ENCODE measurements at regions of chr1 and their contacts with region 1.

Region 1: GRCh38 chr1:205791568-205792180 is 16.4 kb upstream of the RAB29 start:
- DNase-seq: no peak
- H3K4me3 ChIP-seq: no peak overlapping the region
- H3K27ac ChIP-seq: no peak overlapping the region
- H3K4me1 ChIP-seq: no peaks in the 10 kb centered on the region
- H3K27me3 ChIP-seq: no peaks in the 10 kb centered on the region
- CTCF ChIP-seq: peak; percentile 19 to 80 (median 60)
- EP300 ChIP-seq: no peak
- POLR2A ChIP-seq: no peak

Region 2: DNA sequence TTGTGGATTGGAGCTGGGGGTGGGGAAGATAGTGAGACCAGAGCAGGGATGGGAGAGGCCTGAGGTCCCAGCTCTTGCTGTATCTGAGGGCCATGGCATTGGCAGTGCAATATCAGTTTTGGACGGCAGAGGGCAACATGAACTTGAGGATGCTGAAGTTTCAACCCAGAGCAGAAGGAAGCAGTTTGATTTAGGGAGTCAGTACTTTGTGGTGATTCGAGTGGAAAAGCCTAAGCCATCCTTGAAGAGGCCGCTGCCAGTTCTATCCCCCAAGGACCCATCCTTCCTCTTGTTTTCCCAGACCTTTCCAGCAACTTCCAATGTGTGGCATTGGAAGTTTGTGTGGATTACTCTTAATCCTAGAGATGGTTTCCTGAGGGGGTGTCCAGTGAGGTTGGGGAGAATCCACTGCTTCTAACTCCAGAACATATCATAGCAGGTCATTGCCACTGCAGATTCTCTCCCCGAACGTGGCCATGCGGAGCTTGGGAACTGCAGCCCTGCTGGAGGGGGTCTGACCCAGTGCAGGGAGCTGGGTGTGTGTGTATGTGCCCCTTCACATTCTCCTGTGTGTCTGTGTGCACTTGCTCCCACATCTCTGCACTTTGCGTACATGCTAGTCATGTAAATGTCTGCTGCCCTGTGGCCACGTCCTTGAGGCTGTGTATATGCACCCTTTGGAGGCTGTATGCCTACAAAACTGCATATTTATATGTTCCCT is 127.5 kb after region 1 on chr1:
- intact Hi-C with region 1: loop called (anchors 5 kb)
- DNase-seq: peak; percentile 82
- H3K4me3 ChIP-seq: no peak overlapping the region
- H3K27ac ChIP-seq: no peak overlapping the region
- H3K4me1 ChIP-seq: peaks cover 0 to 4% (median 0%) of the 10 kb centered on the region in 4 donors
- H3K27me3 ChIP-seq: no peaks in the 10 kb centered on the region
- CTCF ChIP-seq: peak; percentile 66 to 94 (median 83)
- EP300 ChIP-seq: no peak
- POLR2A ChIP-seq: no peak

Region 3: GRCh38 chr1:205977402-205978014 is 185.8 kb after region 1 on chr1:
- intact Hi-C with region 1: loop called (anchors 1 kb)
- DNase-seq: peak; percentile 76
- H3K4me3 ChIP-seq: no peak overlapping the region
- H3K27ac ChIP-seq: no peak overlapping the region
- H3K4me1 ChIP-seq: peaks cover 0 to 4% (median 0%) of the 10 kb centered on the region in 4 donors
- H3K27me3 ChIP-seq: no peaks in the 10 kb centered on the region
- CTCF ChIP-seq: peak; percentile 64 to 92 (median 90)
- EP300 ChIP-seq: no peak
- POLR2A ChIP-seq: no peak